Body of pancreas (tissue), 4 donors: ENCODE measurements at regions of chr7 and their contacts with region 1.

Region 1: DNA sequence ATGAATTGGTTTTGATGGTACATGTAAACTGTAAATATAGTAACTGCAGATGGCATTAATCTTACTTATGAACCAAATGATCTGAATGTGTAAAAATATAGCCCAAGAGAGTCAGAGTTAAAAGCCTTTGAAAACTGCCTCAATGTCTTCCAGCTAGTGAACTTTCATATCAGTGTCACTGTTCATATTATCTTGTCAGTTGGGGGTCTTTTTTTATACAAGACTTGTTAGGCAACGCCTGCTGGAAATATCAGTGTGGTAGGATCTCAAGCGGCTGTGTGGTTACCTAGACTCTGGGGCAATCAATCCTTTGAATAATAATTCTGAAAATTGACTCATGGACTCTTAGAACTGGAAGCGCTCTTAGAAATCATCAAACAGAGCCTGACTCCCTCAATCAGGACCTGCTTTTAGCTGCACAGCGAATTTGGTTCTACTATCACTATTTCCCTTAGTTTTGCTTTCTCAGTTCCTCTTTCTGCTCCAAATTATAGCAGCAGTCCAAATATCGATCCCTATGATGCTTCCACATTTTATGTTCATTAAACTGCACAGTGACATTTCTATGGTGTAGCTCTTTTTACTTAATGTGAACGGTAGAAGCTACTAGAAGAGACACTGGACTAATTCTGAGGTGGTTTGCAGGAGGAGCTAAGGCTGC is 100.1 kb upstream of the COL1A2 start:
- DNase-seq: no peak
- ATAC-seq: no peak
- H3K4me3 ChIP-seq: no peak overlapping the region
- H3K27ac ChIP-seq: no peak overlapping the region
- H3K4me1 ChIP-seq: peaks cover 5% of the 10 kb centered on the region
- H3K27me3 ChIP-seq: no peaks in the 10 kb centered on the region
- CTCF ChIP-seq: no peak
- POLR2A ChIP-seq: no peak

Region 2: DNA sequence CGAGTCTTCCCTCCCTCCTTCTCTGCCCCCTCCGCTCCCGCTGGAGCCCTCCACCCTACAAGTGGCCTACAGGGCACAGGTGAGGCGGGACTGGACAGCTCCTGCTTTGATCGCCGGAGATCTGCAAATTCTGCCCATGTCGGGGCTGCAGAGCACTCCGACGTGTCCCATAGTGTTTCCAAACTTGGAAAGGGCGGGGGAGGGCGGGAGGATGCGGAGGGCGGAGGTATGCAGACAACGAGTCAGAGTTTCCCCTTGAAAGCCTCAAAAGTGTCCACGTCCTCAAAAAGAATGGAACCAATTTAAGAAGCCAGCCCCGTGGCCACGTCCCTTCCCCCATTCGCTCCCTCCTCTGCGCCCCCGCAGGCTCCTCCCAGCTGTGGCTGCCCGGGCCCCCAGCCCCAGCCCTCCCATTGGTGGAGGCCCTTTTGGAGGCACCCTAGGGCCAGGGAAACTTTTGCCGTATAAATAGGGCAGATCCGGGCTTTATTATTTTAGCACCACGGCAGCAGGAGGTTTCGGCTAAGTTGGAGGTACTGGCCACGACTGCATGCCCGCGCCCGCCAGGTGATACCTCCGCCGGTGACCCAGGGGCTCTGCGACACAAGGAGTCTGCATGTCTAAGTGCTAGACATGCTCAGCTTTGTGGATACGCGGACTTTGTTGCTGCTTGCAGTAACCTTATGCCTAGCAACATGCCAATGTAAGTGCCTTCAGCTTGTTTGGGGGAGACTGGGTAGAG is 100.0 kb after region 1 on chr7 and contains the start of gene COL1A2:
- intact Hi-C with region 1: loop called (anchors 5 kb)
- DNase-seq: peak; percentile 28 to 58 (median 40)
- ATAC-seq: peak; percentile 52
- H3K4me3 ChIP-seq: no peak within 1 kb of the TSS
- H3K27ac ChIP-seq: peak within 1 kb of the TSS in 3 of 4 donors; percentile 10 to 38 (median 32)
- H3K4me1 ChIP-seq: peaks cover 10% of the 10 kb centered on the region
- H3K27me3 ChIP-seq: peaks cover 0 to 8% of the 10 kb centered on the region in 2 donors
- CTCF ChIP-seq: no peak
- POLR2A ChIP-seq: peak in 2 of 3 donors; percentile 41 to 54
- total RNA-seq, gene COL1A2: 54.0 to 107 TPM